Left cardiac atrium (tissue), 4 donors: ENCODE measurements at regions of chr14 and their contacts with region 1.

Region 1: GRCh38 chr14:95098984-95099599 is 58.2 kb downstream of the DICER1 start:
- DNase-seq: peak; percentile 74
- ATAC-seq: peak; percentile 72 to 82

Region 2: GRCh38 chr14:94689218-94689984 is 409.7 kb before region 1 on chr14:
- intact Hi-C with region 1: loop called (anchors 5 to 10 kb)
- DNase-seq: peak; percentile 56
- ATAC-seq: peak; percentile 94 to 95

Region 3: GRCh38 chr14:94904636-94905035 is 194.5 kb before region 1 on chr14:
- intact Hi-C with region 1: loop called in 1 of 2 experiments (anchors 10 kb)
- DNase-seq: no peak
- ATAC-seq: no peak